Gastrocnemius medialis (tissue), 4 donors: ENCODE measurements at regions of chr3 and their contacts with region 1.

Region 1: DNA sequence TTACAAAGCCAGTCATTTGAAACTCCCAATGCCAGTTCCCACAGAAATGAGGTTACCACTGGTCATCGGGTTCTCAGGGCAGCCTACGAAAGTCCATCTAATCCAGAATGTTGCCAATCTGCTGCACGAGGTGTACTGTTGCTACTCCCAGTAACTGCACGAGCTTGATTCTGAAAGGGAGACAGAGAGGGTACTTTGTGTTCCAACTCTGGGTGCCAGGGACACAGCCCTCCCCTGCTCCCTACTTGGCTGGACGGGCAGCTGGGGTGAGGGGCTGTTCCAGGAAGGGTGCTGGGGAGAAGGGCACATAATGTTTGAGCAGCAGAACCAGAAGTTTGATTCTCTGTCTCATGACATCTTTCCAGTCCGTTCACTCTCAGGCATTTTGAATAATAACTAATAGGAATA is 27.1 kb upstream of the OSBPL11 start:
- DNase-seq: peak; percentile 96 to 97
- ATAC-seq: peak; percentile 90 to 93
- H3K4me3 ChIP-seq: no peak overlapping the region
- H3K27ac ChIP-seq: peak overlapping the region; percentile 98 to 99 (median 98)
- H3K4me1 ChIP-seq: peaks cover 29 to 44% of the 10 kb centered on the region in 2 donors
- H3K27me3 ChIP-seq: no peaks in the 10 kb centered on the region
- CTCF ChIP-seq: no peak
- POLR2A ChIP-seq: peak; percentile 55 to 72

Region 2: GRCh38 chr3:125594581-125595011 is 27.8 kb before region 1 on chr3:
- in situ Hi-C with region 1: no loop called
- intact Hi-C with region 1: loop called (anchors 1 kb)
- DNase-seq: peak in 1 of 2 donors; percentile 26
- ATAC-seq: peak; percentile 32 to 35
- H3K4me3 ChIP-seq: peak overlapping the region; percentile 71 to 89 (median 84)
- H3K27ac ChIP-seq: peak overlapping the region; percentile 91 to 98 (median 94)
- H3K4me1 ChIP-seq: peaks cover 29 to 43% of the 10 kb centered on the region in 2 donors
- H3K27me3 ChIP-seq: no peaks in the 10 kb centered on the region
- CTCF ChIP-seq: no peak
- POLR2A ChIP-seq: no peak

Region 3: DNA sequence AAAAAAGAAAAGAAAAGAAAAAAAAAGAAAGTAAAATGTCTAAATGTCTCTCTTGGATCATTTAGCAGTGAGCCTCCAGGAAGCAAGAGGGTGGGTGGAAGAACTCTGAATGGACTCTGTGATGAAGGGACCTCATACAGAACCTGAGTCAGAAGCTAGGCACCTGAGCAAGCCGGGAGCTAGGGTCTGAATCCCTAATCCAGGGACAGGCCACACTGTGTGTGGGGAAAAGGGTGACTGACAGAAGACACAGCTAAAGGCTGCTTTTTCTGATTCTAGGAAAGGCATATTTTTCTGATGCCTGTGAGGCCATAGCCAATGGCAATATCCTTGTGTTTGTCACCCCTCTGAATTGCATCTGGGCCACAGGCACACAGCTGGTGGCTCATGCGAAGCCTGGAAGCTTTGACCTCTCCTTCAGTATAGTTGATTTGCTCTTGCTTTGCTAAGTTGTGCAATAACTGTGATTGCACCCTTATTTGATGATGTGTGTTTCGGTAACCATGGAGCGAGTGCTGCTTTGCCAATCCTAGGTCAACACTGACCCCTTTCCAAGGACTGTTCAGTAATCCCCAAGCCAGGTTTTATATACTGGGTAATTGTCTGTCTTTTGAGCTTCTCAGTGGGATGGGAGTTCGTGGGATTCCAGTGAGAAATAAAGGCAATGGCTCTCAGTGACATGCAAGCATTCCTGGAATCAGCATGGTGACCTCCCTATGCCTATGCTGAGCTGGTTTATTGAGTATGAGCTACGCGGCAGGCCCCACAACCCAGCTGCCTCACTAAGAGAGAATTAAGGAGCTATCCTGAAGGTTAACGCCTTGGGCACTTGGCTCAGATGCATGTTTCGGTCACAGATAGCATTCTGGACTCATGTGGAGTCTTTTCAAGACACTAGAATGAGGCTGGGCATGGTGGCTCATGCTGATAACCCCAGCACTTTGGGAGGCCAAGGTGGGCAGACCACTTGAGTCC is 21.9 kb after region 1 on chr3:
- in situ Hi-C with region 1: no loop called
- intact Hi-C with region 1: loop called (anchors 1 kb)
- DNase-seq: peak; percentile 48 to 70
- ATAC-seq: peak; percentile 79 to 87
- H3K4me3 ChIP-seq: no peak overlapping the region
- H3K27ac ChIP-seq: peak overlapping the region; percentile 82 to 90 (median 84)
- H3K4me1 ChIP-seq: peaks cover 18 to 30% of the 10 kb centered on the region in 2 donors
- H3K27me3 ChIP-seq: no peaks in the 10 kb centered on the region
- CTCF ChIP-seq: no peak
- POLR2A ChIP-seq: peak; percentile 44 to 46

Region 4: GRCh38 chr3:126267226-126267975 is 645.0 kb after region 1 on chr3:
- in situ Hi-C with region 1: no loop called
- intact Hi-C with region 1: loop called (anchors 10 kb)
- DNase-seq: peak; percentile 61 to 83
- ATAC-seq: peak; percentile 55 to 63
- H3K4me3 ChIP-seq: peak overlapping the region; percentile 11 to 53 (median 46)
- H3K27ac ChIP-seq: peak overlapping the region; percentile 86 to 92 (median 90)
- H3K4me1 ChIP-seq: peaks cover 44 to 51% of the 10 kb centered on the region in 2 donors
- H3K27me3 ChIP-seq: no peaks in the 10 kb centered on the region
- CTCF ChIP-seq: peak in 2 of 5 experiments; percentile 36 to 40
- POLR2A ChIP-seq: peak; percentile 48 to 72

Region 5: GRCh38 chr3:126468028-126468891 is 845.9 kb after region 1 on chr3:
- in situ Hi-C with region 1: no loop called
- intact Hi-C with region 1: loop called (anchors 10 kb)
- DNase-seq: peak; percentile 46 to 61
- ATAC-seq: peak; percentile 33
- H3K4me3 ChIP-seq: no peak overlapping the region
- H3K27ac ChIP-seq: peak overlapping the region; percentile 94 to 97 (median 96)
- H3K4me1 ChIP-seq: peaks cover 91 to 95% of the 10 kb centered on the region in 2 donors
- H3K27me3 ChIP-seq: no peaks in the 10 kb centered on the region
- CTCF ChIP-seq: no peak
- POLR2A ChIP-seq: peak in 1 of 2 donors; percentile 30

Region 6: DNA sequence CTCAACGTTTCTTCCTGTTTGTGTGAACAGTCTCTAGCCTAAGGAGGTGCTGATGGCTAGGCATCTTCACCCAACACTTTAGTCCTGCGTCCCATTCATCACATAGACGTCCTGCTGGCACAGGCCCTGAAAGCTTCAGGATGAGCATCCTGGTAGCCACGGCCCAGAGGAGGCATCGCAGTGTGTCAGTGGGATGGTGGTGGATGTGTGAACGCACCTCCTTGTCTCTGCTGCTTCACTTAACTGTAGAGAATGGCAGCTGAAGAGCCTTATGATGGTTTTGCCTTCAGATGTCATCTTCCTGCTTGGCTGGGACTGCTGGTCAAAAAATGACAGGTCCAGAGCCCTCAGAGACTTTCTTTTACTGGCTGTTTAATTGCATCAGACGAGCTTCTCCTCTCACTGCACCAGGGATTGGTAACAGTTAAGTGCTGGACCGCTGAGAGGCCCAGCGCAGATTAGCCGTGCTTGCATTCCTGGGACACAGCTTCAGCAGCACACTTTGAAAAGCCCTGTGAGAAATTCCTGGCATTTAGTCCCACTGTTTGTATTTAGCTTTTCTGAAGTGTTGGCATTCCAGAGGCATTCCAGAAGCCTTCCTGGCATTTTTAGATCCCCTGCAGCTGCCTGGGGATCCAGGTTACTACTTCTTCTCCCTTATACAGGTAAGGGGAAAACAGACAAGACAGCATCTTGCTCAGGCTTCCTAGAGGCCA is 1228.1 kb after region 1 on chr3:
- in situ Hi-C with region 1: no loop called
- intact Hi-C with region 1: no loop called
- DNase-seq: no peak
- ATAC-seq: no peak
- H3K4me3 ChIP-seq: no peak overlapping the region
- H3K27ac ChIP-seq: no peak overlapping the region
- H3K4me1 ChIP-seq: no peaks in the 10 kb centered on the region
- H3K27me3 ChIP-seq: no peaks in the 10 kb centered on the region
- CTCF ChIP-seq: no peak
- POLR2A ChIP-seq: no peak